Heart left ventricle (tissue), 16 donors: ENCODE measurements at regions of chr7 and their contacts with region 1.

Region 1: GRCh38 chr7:43582503-43583423 is at the start of gene STK17A:
- DNase-seq: peak; percentile 92 to 96 (median 92)
- ATAC-seq: peak; percentile 92 to 99 (median 94)
- H3K4me3 ChIP-seq: peak within 1 kb of the TSS; percentile 79 to 100 (median 92)
- H3K27ac ChIP-seq: peak within 1 kb of the TSS; percentile 67 to 99 (median 93)
- H3K4me1 ChIP-seq: peaks cover 0 to 34% (median 16%) of the 10 kb centered on the region in 12 donors
- H3K27me3 ChIP-seq: peaks cover 0 to 11% (median 0%) of the 10 kb centered on the region in 9 donors
- CTCF ChIP-seq: peak; percentile 90 to 99 (median 94)
- POLR2A ChIP-seq: peak in 1 of 2 donors; percentile 92
- total RNA-seq, gene STK17A: 18.7 to 43.9 (median 26.6) TPM

Region 2: DNA sequence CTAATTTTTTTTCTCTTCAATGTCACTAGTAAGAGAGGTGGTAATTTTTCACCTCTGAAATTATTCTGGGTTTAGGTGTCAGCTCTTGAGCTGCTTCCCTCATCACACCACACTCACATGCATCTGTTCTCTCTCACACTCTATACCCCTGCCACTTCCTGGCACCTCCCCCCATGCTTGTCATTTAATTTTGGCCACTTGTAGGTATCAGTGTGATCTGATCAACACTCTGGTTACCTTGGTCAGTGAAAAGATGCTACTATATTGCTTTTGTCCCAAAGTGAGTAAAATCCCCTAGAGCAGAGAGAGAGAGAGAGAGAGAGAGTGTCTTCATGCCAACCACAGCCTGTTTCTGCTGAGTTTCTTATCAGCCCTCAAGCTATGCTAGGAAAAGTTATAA is 42.7 kb after region 1 on chr7:
- intact Hi-C with region 1: loop called in 1 of 10 experiments (anchors 5 kb)
- DNase-seq: no peak
- ATAC-seq: peak; percentile 35 to 63 (median 59)
- H3K4me3 ChIP-seq: no peak overlapping the region
- H3K27ac ChIP-seq: peak overlapping the region in 1 of 12 donors; percentile 7
- H3K4me1 ChIP-seq: peaks cover 0 to 52% (median 10%) of the 10 kb centered on the region in 12 donors
- H3K27me3 ChIP-seq: no peaks in the 10 kb centered on the region
- CTCF ChIP-seq: no peak
- POLR2A ChIP-seq: no peak

Region 3: GRCh38 chr7:43647673-43648472 is 65.1 kb after region 1 on chr7:
- intact Hi-C with region 1: loop called in 4 of 10 experiments (anchors 1 to 10 kb)
- DNase-seq: peak in 4 of 5 donors; percentile 48 to 75 (median 66)
- ATAC-seq: peak; percentile 55 to 83 (median 75)
- H3K4me3 ChIP-seq: peak overlapping the region in 4 of 12 donors; percentile 1 to 27 (median 8)
- H3K27ac ChIP-seq: peak overlapping the region; percentile 73 to 96 (median 88)
- H3K4me1 ChIP-seq: peaks cover 10 to 81% (median 66%) of the 10 kb centered on the region in 12 donors
- H3K27me3 ChIP-seq: no peaks in the 10 kb centered on the region
- CTCF ChIP-seq: no peak
- POLR2A ChIP-seq: no peak

Region 4: DNA sequence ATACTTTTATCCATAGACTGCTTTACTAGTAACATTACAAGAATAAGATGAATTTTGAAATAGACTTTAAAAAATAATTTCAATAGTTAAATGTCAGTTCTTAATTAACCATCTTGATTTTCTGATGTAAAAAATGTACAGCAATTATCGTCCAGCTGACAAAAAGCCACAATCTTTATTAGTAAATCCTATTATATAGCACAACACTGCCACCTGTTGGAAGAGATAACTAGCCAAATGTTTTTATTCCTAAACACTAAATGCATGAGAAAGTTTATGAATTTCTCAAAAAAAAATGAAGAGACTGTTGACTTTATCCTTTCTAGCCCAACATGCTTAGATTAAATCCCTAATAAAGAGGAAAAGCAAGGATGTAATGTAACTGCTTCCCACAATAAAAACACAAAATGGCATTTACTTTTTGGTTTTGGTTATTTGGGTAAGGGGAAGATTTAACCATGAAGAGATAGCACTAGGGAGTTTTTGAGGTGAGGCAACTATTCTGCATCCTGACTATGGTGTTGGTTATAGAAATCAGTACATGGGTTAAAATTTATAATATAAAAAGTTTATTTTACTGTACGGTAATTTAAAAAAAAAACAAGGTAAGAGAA is 138.5 kb after region 1 on chr7:
- intact Hi-C with region 1: loop called in 7 of 10 experiments (anchors 1 to 5 kb)
- DNase-seq: no peak
- ATAC-seq: no peak
- H3K4me3 ChIP-seq: no peak overlapping the region
- H3K27ac ChIP-seq: no peak overlapping the region
- H3K4me1 ChIP-seq: peaks cover 0 to 18% (median 3%) of the 10 kb centered on the region in 12 donors
- H3K27me3 ChIP-seq: no peaks in the 10 kb centered on the region
- CTCF ChIP-seq: peak; percentile 43 to 78 (median 70)
- POLR2A ChIP-seq: no peak

Region 5: DNA sequence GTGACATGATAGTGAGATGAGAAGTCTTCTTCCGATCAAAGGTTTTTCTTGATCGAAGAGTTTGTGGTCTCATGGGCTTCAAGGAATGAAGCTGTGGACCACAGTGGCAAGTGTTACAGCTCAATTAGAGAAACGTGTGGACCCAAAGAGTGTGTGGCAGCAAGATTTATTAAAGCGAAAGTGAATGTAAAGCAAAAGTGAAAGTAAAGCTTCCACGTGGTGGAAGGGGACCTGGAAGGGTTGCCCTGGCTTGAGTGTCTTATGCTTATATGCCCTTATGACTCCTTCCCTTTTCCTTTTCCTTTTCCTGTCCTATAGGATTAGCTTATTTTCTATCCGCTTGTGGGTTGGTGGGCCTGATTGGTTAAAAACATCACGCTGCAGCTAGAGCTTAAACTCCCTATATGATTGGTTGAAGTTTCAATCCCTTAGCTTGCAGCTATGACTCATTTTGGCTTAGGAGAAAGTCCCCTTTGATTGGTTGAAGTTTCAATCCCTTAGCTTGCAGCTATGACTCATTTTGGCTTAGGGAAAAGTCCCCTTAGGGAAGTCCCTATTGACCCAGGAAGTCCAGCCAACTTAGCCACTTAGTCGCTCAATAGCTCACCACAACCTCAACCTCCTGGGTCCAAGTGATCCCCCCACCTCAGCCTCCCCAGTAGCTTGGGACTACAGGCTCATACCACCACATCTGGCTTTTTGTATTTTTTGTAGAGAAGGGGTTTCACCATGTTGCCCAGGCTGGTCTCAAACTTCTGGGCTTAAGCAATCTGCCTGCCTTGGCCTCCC is 251.9 kb after region 1 on chr7:
- intact Hi-C with region 1: loop called in 9 of 10 experiments (anchors 2 to 5 kb)
- DNase-seq: no peak
- ATAC-seq: peak in 1 of 4 donors; percentile 34
- H3K4me3 ChIP-seq: peak overlapping the region in 9 of 12 donors; percentile 18 to 43 (median 35)
- H3K27ac ChIP-seq: peak overlapping the region in 1 of 12 donors; percentile 46
- H3K4me1 ChIP-seq: peaks cover 0 to 21% (median 0%) of the 10 kb centered on the region in 12 donors
- H3K27me3 ChIP-seq: peaks cover 0 to 5% (median 0%) of the 10 kb centered on the region in 9 donors
- CTCF ChIP-seq: no peak
- POLR2A ChIP-seq: no peak

Region 6: GRCh38 chr7:43954524-43955228 is 371.9 kb after region 1 on chr7:
- intact Hi-C with region 1: loop called in 1 of 10 experiments (anchors 10 kb)
- DNase-seq: no peak
- ATAC-seq: peak in 3 of 4 donors; percentile 70 to 74 (median 72)
- H3K4me3 ChIP-seq: no peak overlapping the region
- H3K27ac ChIP-seq: no peak overlapping the region
- H3K4me1 ChIP-seq: no peaks in the 10 kb centered on the region
- H3K27me3 ChIP-seq: no peaks in the 10 kb centered on the region
- CTCF ChIP-seq: peak; percentile 9 to 50 (median 28)
- POLR2A ChIP-seq: no peak